ENCODE measurements at regions of chr10 and their contacts with region 1.

Region 1: GRCh38 chr10:114095559-114096337 is 52.1 kb downstream of the ADRB1 start:
- DNase-seq: peak in 4 of 9 donors; percentile 24 to 34 (median 30)
- ATAC-seq: peak; percentile 69
- H3K4me3 ChIP-seq: no peak overlapping the region
- H3K4me3 Mint-ChIP-seq: peak overlapping the region in 9 of 10 donors; percentile 15 to 63 (median 56)
- H3K27ac ChIP-seq: no peak overlapping the region
- H3K27ac Mint-ChIP-seq: no peak overlapping the region
- H3K4me1 ChIP-seq: peaks cover 16 to 27% of the 10 kb centered on the region in 2 donors
- H3K4me1 Mint-ChIP-seq: peaks cover 25 to 55% (median 39%) of the 10 kb centered on the region in 7 donors
- H3K27me3 ChIP-seq: peaks cover 0 to under 1% of the 10 kb centered on the region in 2 donors
- H3K27me3 Mint-ChIP-seq: peaks cover 9 to 56% (median 13%) of the 10 kb centered on the region in 5 donors

Region 2: GRCh38 chr10:114043532-114044246 is 52.1 kb before region 1 on chr10 and contains the start of gene ADRB1:
- CTCF ChIA-PET with region 1: no interaction called
- POLR2A ChIA-PET with region 1: no interaction called
- intact Hi-C with region 1: loop called in 1 of 2 experiments (anchors 5 kb)
- DNase-seq: peak in 4 of 9 donors; percentile 2 to 41 (median 16)
- ATAC-seq: peak; percentile 64
- H3K4me3 ChIP-seq: peak within 1 kb of the TSS; percentile 30
- H3K4me3 Mint-ChIP-seq: peak within 1 kb of the TSS; percentile 68 to 84 (median 80)
- H3K27ac ChIP-seq: no peak within 1 kb of the TSS
- H3K27ac Mint-ChIP-seq: peak within 1 kb of the TSS in 2 of 9 donors; percentile 28 to 70
- H3K4me1 ChIP-seq: peaks cover 0 to 8% of the 10 kb centered on the region in 2 donors
- H3K4me1 Mint-ChIP-seq: peaks cover 14 to 27% (median 20%) of the 10 kb centered on the region in 7 donors
- H3K27me3 ChIP-seq: peaks cover 2 to 6% of the 10 kb centered on the region in 2 donors
- H3K27me3 Mint-ChIP-seq: peaks cover 52 to 87% (median 74%) of the 10 kb centered on the region in 5 donors
- total RNA-seq, gene ADRB1: 0.29 to 0.64 TPM in 2 of 5 experiments, not detected in the others

Region 3: DNA sequence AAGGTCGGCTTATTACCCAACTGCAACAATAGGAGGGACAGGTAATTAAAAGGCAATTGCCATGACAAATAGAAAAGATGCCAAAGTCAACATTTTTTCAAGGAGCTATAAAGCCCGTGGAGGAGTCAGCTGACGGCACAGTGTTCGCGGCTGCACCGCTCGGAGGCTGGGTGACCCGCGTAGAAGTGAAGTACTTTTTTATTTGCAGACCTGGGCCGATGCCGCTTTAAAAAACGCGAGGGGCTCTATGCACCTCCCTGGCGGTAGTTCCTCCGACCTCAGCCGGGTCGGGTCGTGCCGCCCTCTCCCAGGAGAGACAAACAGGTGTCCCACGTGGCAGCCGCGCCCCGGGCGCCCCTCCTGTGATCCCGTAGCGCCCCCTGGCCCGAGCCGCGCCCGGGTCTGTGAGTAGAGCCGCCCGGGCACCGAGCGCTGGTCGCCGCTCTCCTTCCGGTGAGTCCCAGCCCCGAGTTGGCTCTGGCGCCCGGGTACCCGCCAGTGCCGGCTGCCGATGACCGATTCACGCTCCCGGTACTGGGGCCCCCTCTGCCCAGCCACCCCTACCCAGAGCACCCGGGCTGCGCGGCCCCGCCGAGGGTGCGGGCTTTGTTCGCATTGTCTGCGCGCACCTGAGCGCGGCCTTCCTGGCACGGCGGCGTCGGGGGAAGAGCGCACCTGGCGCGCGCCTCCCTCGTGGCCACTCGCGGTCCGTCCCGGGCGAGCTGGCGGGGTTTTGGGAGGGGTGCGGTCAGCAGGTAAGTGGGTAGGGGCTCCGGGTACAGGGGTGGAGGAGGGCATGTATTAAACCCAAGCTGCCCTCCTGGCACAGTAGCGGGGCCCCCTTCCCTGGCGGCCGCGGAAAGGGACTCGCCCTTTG is 143.6 kb after region 1 on chr10 and contains the start of gene VWA2:
- CTCF ChIA-PET with region 1: no interaction called
- POLR2A ChIA-PET with region 1: no interaction called
- intact Hi-C with region 1: no loop called
- DNase-seq: peak in 5 of 9 donors; percentile 4 to 14 (median 6)
- ATAC-seq: peak; percentile 31
- H3K4me3 ChIP-seq: no peak within 1 kb of the TSS
- H3K4me3 Mint-ChIP-seq: peak within 1 kb of the TSS in 8 of 10 donors; percentile 23 to 69 (median 57)
- H3K27ac ChIP-seq: no peak within 1 kb of the TSS
- H3K27ac Mint-ChIP-seq: no peak within 1 kb of the TSS
- H3K4me1 ChIP-seq: no peaks in the 10 kb centered on the region
- H3K4me1 Mint-ChIP-seq: peaks cover 0 to 9% (median 4%) of the 10 kb centered on the region in 7 donors
- H3K27me3 ChIP-seq: peaks cover 0 to 4% of the 10 kb centered on the region in 2 donors
- H3K27me3 Mint-ChIP-seq: peaks cover 62 to 70% (median 66%) of the 10 kb centered on the region in 5 donors
- total RNA-seq, gene VWA2: 0.11 to 0.27 TPM in 2 of 5 experiments, not detected in the others

Region 4: DNA sequence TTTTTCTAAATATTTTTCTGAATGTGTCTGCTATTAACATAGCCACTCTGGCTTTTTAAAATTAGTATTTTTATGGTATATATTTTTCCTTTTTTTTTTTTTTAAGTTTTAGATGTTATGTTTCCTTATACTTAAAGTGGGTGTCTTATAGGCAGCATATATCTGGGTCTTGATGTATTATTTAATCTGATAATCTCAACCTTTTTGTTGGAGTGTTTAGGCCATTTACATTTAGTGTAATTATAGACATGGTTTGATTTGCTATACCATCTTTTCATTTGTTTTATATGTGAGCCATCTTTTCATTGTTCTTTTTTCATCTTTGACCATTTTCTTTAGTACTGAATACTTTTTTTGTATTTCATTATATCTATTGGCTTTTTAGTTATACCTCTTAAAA is 887.2 kb after region 1 on chr10:
- CTCF ChIA-PET with region 1: no interaction called
- POLR2A ChIA-PET with region 1: no interaction called
- intact Hi-C with region 1: no loop called
- DNase-seq: no peak
- ATAC-seq: no peak
- H3K4me3 ChIP-seq: no peak overlapping the region
- H3K4me3 Mint-ChIP-seq: no peak overlapping the region
- H3K27ac ChIP-seq: no peak overlapping the region
- H3K27ac Mint-ChIP-seq: no peak overlapping the region
- H3K4me1 ChIP-seq: no peaks in the 10 kb centered on the region
- H3K4me1 Mint-ChIP-seq: peaks cover 0 to 1% (median 0%) of the 10 kb centered on the region in 7 donors
- H3K27me3 ChIP-seq: no peaks in the 10 kb centered on the region
- H3K27me3 Mint-ChIP-seq: no peaks in the 10 kb centered on the region